ENCODE measurements at regions of chr12 and their contacts with region 1.

Region 1: GRCh38 chr12:118850244-118850825 is 131.0 kb upstream of the SRRM4 start:
- DNase-seq: peak; percentile 53 to 84
- H3K4me3 ChIP-seq: no peak overlapping the region
- H3K27ac ChIP-seq: no peak overlapping the region
- H3K4me1 ChIP-seq: peaks cover 0 to 2% (median 0%) of the 10 kb centered on the region in 4 experiments; a peak in 1 of 7 replicates
- H3K27me3 ChIP-seq: no peaks in the 10 kb centered on the region
- CTCF ChIP-seq: peak; percentile 68 to 98 (median 80)
- EP300 ChIP-seq: no peak; a peak in 1 of 3 replicates
- POLR2A ChIP-seq: no peak
- RAD21 ChIP-seq: peak; percentile 86 to 88

Region 2: DNA sequence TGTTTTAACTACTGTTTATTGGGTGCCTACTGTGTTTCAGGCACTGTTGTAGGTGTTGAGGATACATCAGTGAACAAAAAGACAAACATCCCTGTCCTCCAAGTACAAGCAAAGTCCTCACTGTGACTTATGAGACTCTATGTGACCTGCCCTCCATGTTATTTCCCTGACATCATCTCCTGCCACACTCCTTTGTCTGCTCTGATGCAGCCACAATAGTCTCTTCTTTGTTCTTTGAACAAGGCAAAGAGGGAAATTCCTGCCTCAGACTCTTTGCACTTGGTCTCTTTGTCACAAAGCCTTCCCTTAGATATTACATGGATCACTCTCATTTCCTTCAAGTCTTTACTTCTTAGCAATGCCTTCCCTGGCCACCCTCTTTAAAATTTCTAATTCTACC is 109.1 kb before region 1 on chr12:
- CTCF ChIA-PET with region 1: no interaction called
- POLR2A ChIA-PET with region 1: no interaction called
- DNase-seq: no peak
- H3K4me3 ChIP-seq: no peak overlapping the region
- H3K27ac ChIP-seq: no peak overlapping the region
- H3K4me1 ChIP-seq: no peaks in the 10 kb centered on the region
- H3K27me3 ChIP-seq: no peaks in the 10 kb centered on the region
- CTCF ChIP-seq: no peak
- EP300 ChIP-seq: no peak
- POLR2A ChIP-seq: no peak
- RAD21 ChIP-seq: no peak

Region 3: DNA sequence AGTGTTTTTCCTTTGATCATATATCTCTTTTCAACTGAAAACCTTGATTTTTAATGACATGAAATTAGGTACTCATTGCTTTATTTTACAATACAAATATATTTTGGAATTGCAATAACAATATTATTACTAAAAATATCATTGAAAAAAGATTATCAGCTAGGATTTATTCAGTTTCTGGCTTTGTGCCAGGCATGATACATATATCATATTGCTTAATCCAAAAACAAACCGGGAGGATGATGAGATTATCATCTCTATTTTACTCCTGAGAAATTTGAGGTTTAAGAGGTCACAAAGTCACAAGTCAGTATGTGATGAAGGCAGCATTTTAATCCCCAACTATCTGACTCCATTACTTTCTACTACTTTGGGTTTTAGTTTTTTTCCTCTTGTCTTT is 73.3 kb before region 1 on chr12:
- CTCF ChIA-PET with region 1: no interaction called
- POLR2A ChIA-PET with region 1: no interaction called
- DNase-seq: no peak
- H3K4me3 ChIP-seq: no peak overlapping the region
- H3K27ac ChIP-seq: no peak overlapping the region
- H3K4me1 ChIP-seq: peaks cover 5 to 18% (median 6%) of the 10 kb centered on the region in 4 experiments; a peak in 6 of 7 replicates
- H3K27me3 ChIP-seq: peaks cover 0 to 7% (median 4%) of the 10 kb centered on the region in 4 experiments; a peak in 4 of 7 replicates
- CTCF ChIP-seq: no peak
- EP300 ChIP-seq: no peak
- POLR2A ChIP-seq: no peak
- RAD21 ChIP-seq: no peak

Region 4: GRCh38 chr12:118866346-118866745 is 16.0 kb after region 1 on chr12:
- CTCF ChIA-PET with region 1: interaction called, 10 read pairs
- POLR2A ChIA-PET with region 1: interaction called, 3 read pairs
- DNase-seq: peak in 1 of 2 experiments; percentile 62
- H3K4me3 ChIP-seq: no peak overlapping the region
- H3K27ac ChIP-seq: no peak overlapping the region
- H3K4me1 ChIP-seq: 0 out of 7 replicates have a peak, but pooled peaks cover 0 to 2% (median 0%) of the 10 kb centered on the region in 4 experiments
- H3K27me3 ChIP-seq: no peaks in the 10 kb centered on the region; a peak in 1 of 7 replicates
- CTCF ChIP-seq: no peak
- EP300 ChIP-seq: no peak
- POLR2A ChIP-seq: no peak
- RAD21 ChIP-seq: no peak

Measured in H1 (cell line).